MCF 10A (cell line): ENCODE measurements at regions of chr7 and their contacts with region 1.

Region 1: DNA sequence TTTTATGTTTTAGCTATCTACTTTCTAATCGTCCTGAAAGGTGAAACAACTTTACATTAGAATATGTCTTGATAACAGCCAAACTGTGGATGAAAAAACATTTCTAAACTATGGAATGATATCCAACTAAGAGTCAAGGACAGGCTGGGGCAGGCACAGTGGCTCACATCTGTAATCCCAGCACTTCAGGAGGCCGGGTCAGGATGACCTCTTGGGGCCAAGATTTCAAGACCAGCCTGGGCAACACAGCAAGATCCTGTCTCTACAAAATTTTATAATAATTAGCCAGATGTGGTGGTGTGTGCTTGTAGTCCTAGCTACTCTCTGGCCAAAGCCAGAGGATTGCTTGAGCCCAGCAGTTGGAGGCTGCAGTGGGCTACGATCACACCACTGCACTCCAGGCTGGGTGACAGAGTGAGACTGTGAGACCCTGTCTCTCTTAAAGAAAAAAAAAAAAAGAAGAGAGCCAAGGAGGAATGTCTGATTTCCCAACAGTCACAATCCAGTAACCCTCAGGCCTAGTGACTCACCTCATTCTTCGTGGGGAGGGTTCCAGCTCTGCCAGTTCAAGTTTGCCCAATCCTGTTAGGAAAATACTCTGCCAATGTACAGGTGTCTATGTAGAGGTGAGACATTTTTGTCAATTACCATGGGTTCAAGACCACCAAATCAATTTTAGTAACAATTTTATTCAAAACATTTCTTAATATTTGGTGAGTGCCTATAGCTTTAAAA is 14.6 kb upstream of the FZD1 start:
- DNase-seq: peak; percentile 95
- H3K4me3 Mint-ChIP-seq: no peak overlapping the region
- H3K27ac Mint-ChIP-seq: peak overlapping the region; percentile 80
- H3K4me1 Mint-ChIP-seq: peaks cover 25% of the 10 kb centered on the region
- H3K27me3 Mint-ChIP-seq: no peaks in the 10 kb centered on the region
- CTCF ChIP-seq: no peak

Region 2: GRCh38 chr7:91226411-91226810 is 23.3 kb before region 1 on chr7:
- CTCF ChIA-PET with region 1: no interaction called
- POLR2A ChIA-PET with region 1: no interaction called
- intact Hi-C with region 1: no loop called
- DNase-seq: no peak
- H3K4me3 Mint-ChIP-seq: no peak overlapping the region
- H3K27ac Mint-ChIP-seq: no peak overlapping the region
- H3K4me1 Mint-ChIP-seq: no peaks in the 10 kb centered on the region
- H3K27me3 Mint-ChIP-seq: no peaks in the 10 kb centered on the region
- CTCF ChIP-seq: no peak

Region 3: GRCh38 chr7:91239171-91239604 is 10.5 kb before region 1 on chr7:
- CTCF ChIA-PET with region 1: interaction called, 3 read pairs
- POLR2A ChIA-PET with region 1: interaction called, 13 read pairs
- intact Hi-C with region 1: no loop called
- DNase-seq: peak; percentile 81
- H3K4me3 Mint-ChIP-seq: peak overlapping the region; percentile 20
- H3K27ac Mint-ChIP-seq: peak overlapping the region; percentile 89
- H3K4me1 Mint-ChIP-seq: peaks cover 34% of the 10 kb centered on the region
- H3K27me3 Mint-ChIP-seq: no peaks in the 10 kb centered on the region
- CTCF ChIP-seq: no peak

Region 4: DNA sequence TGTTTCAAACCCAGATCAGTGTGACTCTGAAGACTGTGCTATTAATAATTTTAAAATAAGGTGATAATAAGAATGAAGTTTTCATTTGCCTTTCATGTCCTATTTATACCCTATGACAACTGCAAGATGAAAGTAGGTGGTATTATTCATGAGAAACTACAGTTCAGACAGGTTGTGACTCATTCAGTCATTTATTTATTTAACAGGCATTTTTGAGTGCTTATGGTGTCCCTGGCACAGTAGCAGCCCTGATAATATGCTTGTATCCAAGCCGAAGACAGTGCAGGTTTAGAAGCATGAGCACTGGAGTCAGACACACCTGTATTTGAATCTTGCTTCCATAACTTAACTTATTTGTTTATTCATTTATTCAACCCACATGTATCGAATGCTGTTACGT is 101.7 kb after region 1 on chr7:
- CTCF ChIA-PET with region 1: no interaction called
- POLR2A ChIA-PET with region 1: no interaction called
- intact Hi-C with region 1: no loop called
- DNase-seq: peak; percentile 30
- H3K4me3 Mint-ChIP-seq: no peak overlapping the region
- H3K27ac Mint-ChIP-seq: no peak overlapping the region
- H3K4me1 Mint-ChIP-seq: no peaks in the 10 kb centered on the region
- H3K27me3 Mint-ChIP-seq: peaks cover 61% of the 10 kb centered on the region
- CTCF ChIP-seq: no peak